Activated CD4-positive, alpha-beta T cell treated with anti-CD3 and anti-CD28 coated beads for 36 hours (primary cell): ENCODE measurements at regions of chr19 and their contacts with region 1.

Region 1: DNA sequence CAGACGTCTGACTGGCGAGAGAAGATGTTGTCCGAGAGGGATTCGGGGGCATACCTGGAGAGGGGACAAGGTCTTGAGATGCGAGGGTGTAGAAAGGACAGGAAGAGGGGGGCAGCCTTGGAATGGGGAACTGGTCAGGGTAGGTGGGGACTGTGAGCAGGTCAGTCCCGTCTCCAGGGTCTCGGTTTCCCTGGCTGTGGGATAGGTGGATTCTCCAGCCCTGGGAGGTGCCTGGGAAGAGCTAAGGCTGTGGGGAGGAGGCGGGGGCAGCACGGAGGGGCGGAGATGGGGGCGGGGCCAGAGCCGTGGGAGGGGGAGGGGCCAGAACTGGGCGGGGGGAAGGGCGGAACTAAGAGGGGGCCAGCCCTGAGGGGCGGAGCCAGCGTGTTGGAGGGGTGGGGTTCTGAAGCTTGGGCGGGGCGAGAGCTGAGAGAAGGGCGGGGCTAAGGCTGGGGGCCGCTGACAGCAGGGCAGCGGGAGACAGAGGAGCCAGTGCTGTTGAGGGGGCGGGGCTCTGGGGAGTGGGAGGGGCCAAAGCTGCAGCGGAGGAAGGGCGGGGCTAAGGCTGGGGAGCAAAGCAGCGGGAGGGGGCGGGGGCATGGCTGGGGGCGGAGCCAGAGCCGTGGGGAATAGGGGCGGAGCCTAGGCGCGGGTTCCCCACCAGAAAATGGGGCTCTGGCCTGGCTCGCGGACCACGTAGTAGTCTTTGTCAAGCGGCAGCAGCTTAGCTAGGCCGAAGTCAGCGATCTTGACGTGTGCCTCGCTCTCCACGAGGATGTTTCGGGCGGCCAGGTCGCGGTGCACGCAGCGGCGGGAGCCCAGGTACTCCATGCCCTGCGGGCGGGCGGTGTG is 9.5 kb upstream of the INSL3 start:
- DNase-seq: peak; percentile 87
- ATAC-seq: peak; percentile 90
- H3K4me3 Mint-ChIP-seq: no peak overlapping the region
- H3K27ac Mint-ChIP-seq: no peak overlapping the region
- H3K4me1 Mint-ChIP-seq: peaks cover 6% of the 10 kb centered on the region
- H3K27me3 Mint-ChIP-seq: no peaks in the 10 kb centered on the region

Region 2: GRCh38 chr19:17747205-17748098 is 83.3 kb before region 1 on chr19:
- CTCF ChIA-PET with region 1: no interaction called
- POLR2A ChIA-PET with region 1: no interaction called
- intact Hi-C with region 1: loop called in 1 of 2 experiments (anchors 1 kb)
- DNase-seq: peak; percentile 98
- ATAC-seq: peak; percentile 90
- H3K4me3 Mint-ChIP-seq: peak overlapping the region; percentile 76
- H3K27ac Mint-ChIP-seq: peak overlapping the region; percentile 60
- H3K4me1 Mint-ChIP-seq: peaks cover 42% of the 10 kb centered on the region
- H3K27me3 Mint-ChIP-seq: no peaks in the 10 kb centered on the region

Region 3: DNA sequence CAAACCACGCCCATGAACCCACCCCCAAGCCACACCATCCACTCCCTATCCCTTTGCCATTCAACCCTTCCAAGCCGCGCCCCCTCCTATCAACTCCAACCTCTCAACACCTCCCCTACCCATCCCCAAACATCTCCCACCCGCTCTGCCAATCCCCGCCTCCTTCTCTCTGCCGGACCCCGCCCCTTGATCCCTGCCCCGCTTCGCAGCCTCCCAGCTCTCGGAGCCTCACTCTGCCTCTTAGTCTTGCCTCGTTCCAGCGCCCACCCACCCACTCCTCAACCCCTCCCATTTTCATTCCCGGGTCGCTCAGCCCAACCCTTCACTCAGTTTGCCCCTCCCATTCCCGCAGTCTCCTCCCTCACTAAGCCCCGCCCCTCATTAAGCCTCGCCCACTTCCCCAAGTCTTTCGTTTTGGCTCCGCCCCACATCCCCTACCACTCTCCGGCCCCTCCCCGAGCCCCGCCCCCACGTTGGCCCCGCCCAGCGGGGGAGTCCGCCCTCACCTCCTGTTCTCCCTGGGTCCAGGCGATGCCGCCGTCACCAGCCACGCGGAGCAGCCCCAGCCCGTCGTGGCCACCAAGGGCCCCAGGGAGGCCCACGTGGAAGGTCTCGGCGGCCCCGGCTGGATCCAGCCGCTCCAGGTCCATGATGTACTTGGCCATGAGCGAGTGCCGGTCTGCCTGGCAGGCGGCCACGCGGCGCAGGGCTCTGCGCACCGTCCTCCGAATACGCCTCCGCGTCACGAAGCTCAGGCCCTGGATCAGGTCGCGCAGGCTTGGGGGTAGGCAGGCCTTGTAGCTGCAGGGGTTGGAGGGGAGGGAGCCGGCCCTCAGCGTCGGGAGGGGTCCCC is 11.2 kb after region 1 on chr19:
- CTCF ChIA-PET with region 1: no interaction called
- POLR2A ChIA-PET with region 1: interaction called, 6 read pairs
- intact Hi-C with region 1: loop called in 1 of 2 experiments (anchors 1 kb)
- DNase-seq: peak; percentile 90
- ATAC-seq: peak; percentile 89
- H3K4me3 Mint-ChIP-seq: no peak overlapping the region
- H3K27ac Mint-ChIP-seq: no peak overlapping the region
- H3K4me1 Mint-ChIP-seq: peaks cover 36% of the 10 kb centered on the region
- H3K27me3 Mint-ChIP-seq: no peaks in the 10 kb centered on the region

Region 4: GRCh38 chr19:17873786-17874757 is 43.3 kb after region 1 on chr19:
- CTCF ChIA-PET with region 1: no interaction called
- POLR2A ChIA-PET with region 1: no interaction called
- intact Hi-C with region 1: loop called (anchors 2 kb)
- DNase-seq: peak; percentile 89
- ATAC-seq: peak; percentile 83
- H3K4me3 Mint-ChIP-seq: peak overlapping the region; percentile 78
- H3K27ac Mint-ChIP-seq: peak overlapping the region; percentile 25
- H3K4me1 Mint-ChIP-seq: peaks cover 17% of the 10 kb centered on the region
- H3K27me3 Mint-ChIP-seq: no peaks in the 10 kb centered on the region

Region 5: DNA sequence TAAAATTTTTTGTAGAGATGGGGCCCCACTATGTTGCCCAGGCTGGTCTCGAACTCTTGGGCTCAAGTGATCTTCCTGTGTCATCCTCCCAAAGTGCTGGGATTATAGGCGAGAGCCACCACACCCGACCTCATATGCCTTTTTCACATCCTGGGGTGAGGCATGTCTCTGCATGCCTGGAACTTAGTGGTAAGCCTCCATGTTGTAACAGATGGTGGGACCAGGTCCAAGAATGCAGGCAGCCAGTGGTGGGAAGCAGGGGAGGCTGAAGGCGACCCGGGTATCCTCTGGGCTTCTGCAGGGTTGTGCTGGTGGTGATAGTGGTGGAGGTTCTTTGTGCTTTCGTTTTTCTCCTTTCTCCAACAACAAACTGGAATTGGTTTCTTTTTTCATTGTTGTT is 71.9 kb after region 1 on chr19:
- CTCF ChIA-PET with region 1: no interaction called
- POLR2A ChIA-PET with region 1: no interaction called
- intact Hi-C with region 1: no loop called
- DNase-seq: no peak
- ATAC-seq: no peak
- H3K4me3 Mint-ChIP-seq: no peak overlapping the region
- H3K27ac Mint-ChIP-seq: no peak overlapping the region
- H3K4me1 Mint-ChIP-seq: no peaks in the 10 kb centered on the region
- H3K27me3 Mint-ChIP-seq: peaks cover 5% of the 10 kb centered on the region

Region 6: GRCh38 chr19:17947815-17948513 is 117.2 kb after region 1 on chr19:
- CTCF ChIA-PET with region 1: no interaction called
- POLR2A ChIA-PET with region 1: no interaction called
- intact Hi-C with region 1: no loop called
- DNase-seq: peak; percentile 98
- ATAC-seq: peak; percentile 61
- H3K4me3 Mint-ChIP-seq: peak overlapping the region; percentile 70
- H3K27ac Mint-ChIP-seq: no peak overlapping the region
- H3K4me1 Mint-ChIP-seq: peaks cover 50% of the 10 kb centered on the region
- H3K27me3 Mint-ChIP-seq: peaks cover 33% of the 10 kb centered on the region

Region 7: GRCh38 chr19:18044825-18045304 is 214.1 kb after region 1 on chr19:
- CTCF ChIA-PET with region 1: no interaction called
- POLR2A ChIA-PET with region 1: no interaction called
- intact Hi-C with region 1: no loop called
- DNase-seq: peak; percentile 96
- ATAC-seq: peak; percentile 94
- H3K4me3 Mint-ChIP-seq: peak overlapping the region; percentile 11
- H3K27ac Mint-ChIP-seq: peak overlapping the region; percentile 16
- H3K4me1 Mint-ChIP-seq: peaks cover 34% of the 10 kb centered on the region
- H3K27me3 Mint-ChIP-seq: peaks cover 9% of the 10 kb centered on the region